KBM-7 (cell line): ENCODE measurements at regions of chr14 and their contacts with region 1.

Region 1: GRCh38 chr14:55707365-55707804 is 127.4 kb downstream of the KTN1 start:
- DNase-seq: peak; percentile 27

Region 2: DNA sequence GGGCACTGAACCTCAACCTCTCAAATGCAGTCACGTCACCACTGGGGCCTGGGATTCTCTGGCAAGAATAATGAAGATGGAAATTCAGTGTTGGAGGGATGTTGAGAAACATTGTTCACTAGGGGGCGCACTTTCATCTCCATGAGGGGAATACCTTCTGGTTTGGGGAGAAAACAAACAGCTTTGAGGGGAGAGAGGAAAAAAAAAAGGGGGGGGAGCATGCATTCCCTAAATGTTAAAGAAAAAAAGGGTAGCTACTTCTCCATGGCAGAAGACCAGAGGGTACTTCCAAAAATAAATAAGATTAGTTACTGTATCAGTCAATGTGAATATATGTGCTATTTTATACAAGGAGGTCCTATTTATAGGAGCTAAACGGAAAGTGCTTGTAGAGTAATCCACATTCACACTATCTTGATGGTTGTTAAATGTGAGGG is 261.1 kb before region 1 on chr14:
- in situ Hi-C with region 1: loop called (anchors 25 kb)
- DNase-seq: peak; percentile 89